Natural killer cell (primary cell): ENCODE measurements at regions of chr12 and their contacts with region 1.

Region 1: DNA sequence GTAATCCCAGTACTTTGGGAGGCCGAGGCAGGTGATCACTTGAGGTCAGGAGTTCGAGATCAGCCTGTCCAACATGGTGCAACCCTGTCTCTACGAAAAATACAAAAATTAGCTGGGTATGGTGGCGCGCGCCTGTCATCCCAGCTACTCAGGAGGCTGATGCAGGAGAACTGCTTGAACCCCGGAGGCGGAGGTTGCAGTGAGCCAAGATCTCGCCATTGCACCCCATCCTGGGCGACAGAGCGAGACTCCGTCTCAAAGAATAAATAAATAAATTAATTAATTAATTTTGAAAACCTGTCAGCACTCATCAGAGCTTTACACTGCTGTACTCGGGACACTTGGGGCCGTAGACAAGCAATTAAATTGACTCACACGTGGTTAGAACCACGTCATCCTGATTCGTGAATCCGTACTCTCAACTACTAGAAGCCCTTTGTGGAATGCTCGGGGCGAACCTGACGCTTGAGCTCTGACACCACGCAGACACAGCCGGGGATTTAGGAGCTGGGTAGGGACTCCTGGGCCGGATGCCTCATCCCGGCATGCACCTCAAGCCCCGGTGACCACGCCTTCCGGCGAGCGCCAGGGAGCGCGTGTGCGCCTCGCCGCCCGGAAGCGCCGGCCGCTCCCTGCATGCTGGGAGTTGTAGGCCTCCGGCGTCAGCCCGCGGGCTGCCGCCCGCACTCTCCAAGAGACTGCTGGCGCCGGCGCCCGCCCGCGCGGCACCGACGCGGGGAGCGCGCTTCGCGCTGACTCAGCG is at the start of gene XPOT:
- DNase-seq: peak; percentile 87 to 98
- ATAC-seq: peak; percentile 90 to 98 (median 93)
- H3K4me3 ChIP-seq: peak within 1 kb of the TSS; percentile 100
- H3K4me3 Mint-ChIP-seq: peak within 1 kb of the TSS; percentile 99
- H3K27ac ChIP-seq: peak within 1 kb of the TSS; percentile 96
- H3K27ac Mint-ChIP-seq: peak within 1 kb of the TSS; percentile 88 to 98
- H3K4me1 ChIP-seq: peaks cover 18% of the 10 kb centered on the region
- H3K4me1 Mint-ChIP-seq: peaks cover 8 to 15% of the 10 kb centered on the region in 2 donors
- H3K27me3 ChIP-seq: no peaks in the 10 kb centered on the region
- H3K27me3 Mint-ChIP-seq: peaks cover 8 to 10% of the 10 kb centered on the region in 2 donors
- CTCF ChIP-seq: no peak
- total RNA-seq, gene XPOT: 39.8 to 51.5 (median 45.0) TPM

Region 2: DNA sequence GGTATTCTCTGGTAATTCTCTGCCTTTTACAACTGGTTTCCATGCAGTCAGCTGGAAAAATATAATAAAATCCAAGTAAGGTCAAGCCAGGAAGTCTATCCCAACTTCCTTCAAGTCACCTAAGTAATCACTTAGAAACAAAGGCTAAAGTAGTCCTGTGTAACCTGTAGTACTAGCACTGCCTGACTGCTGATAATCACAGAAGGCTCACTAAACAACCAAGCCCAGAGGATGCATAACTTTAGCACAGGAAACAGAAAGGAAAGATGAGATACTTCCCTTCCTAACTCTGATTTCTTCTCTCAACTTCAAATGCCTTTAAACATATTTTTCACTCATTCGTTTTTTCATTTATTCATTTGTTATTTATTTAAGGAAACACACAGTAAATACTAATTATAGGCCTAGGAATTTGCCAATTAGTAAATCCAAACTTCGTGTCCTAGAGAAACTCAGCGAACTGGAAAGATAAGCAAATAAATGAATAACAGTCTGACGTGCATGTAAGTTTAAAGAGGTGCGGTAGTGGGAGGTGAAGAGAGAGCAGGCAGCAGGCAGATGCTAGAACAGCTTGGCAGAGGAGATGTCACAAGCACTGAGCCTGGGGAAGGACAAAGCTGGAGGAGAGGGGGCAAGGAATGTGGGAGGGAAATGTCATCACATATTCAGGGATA is 964.0 kb before region 1 on chr12:
- intact Hi-C with region 1: no loop called
- DNase-seq: no peak
- ATAC-seq: no peak
- H3K4me3 ChIP-seq: no peak overlapping the region
- H3K4me3 Mint-ChIP-seq: no peak overlapping the region
- H3K27ac ChIP-seq: no peak overlapping the region
- H3K27ac Mint-ChIP-seq: no peak overlapping the region
- H3K4me1 ChIP-seq: no peaks in the 10 kb centered on the region
- H3K4me1 Mint-ChIP-seq: no peaks in the 10 kb centered on the region
- H3K27me3 ChIP-seq: no peaks in the 10 kb centered on the region
- H3K27me3 Mint-ChIP-seq: peaks cover 0 to 2% of the 10 kb centered on the region in 2 donors
- CTCF ChIP-seq: no peak

Region 3: GRCh38 chr12:64222009-64222765 is 181.7 kb before region 1 on chr12 and contains the start of gene KICS2:
- intact Hi-C with region 1: loop called (anchors 1 kb)
- DNase-seq: peak; percentile 92 to 97
- ATAC-seq: peak; percentile 89 to 97 (median 92)
- H3K4me3 ChIP-seq: peak within 1 kb of the TSS; percentile 94
- H3K4me3 Mint-ChIP-seq: peak within 1 kb of the TSS; percentile 98
- H3K27ac ChIP-seq: peak within 1 kb of the TSS; percentile 94
- H3K27ac Mint-ChIP-seq: peak within 1 kb of the TSS; percentile 96 to 97
- H3K4me1 ChIP-seq: peaks cover 12% of the 10 kb centered on the region
- H3K4me1 Mint-ChIP-seq: peaks cover 26 to 37% of the 10 kb centered on the region in 2 donors
- H3K27me3 ChIP-seq: no peaks in the 10 kb centered on the region
- H3K27me3 Mint-ChIP-seq: peaks cover 15 to 21% of the 10 kb centered on the region in 2 donors
- CTCF ChIP-seq: no peak
- total RNA-seq, gene KICS2: 14.7 to 19.5 (median 15.6) TPM

Region 4: GRCh38 chr12:64451687-64452558 is 48.0 kb after region 1 on chr12 and contains the start of gene TBK1:
- intact Hi-C with region 1: loop called (anchors 2 kb)
- DNase-seq: peak; percentile 72 to 77
- ATAC-seq: peak; percentile 71 to 84 (median 80)
- H3K4me3 ChIP-seq: peak within 1 kb of the TSS; percentile 98
- H3K4me3 Mint-ChIP-seq: peak within 1 kb of the TSS; percentile 96
- H3K27ac ChIP-seq: peak within 1 kb of the TSS; percentile 89
- H3K27ac Mint-ChIP-seq: peak within 1 kb of the TSS; percentile 94 to 97
- H3K4me1 ChIP-seq: peaks cover 11% of the 10 kb centered on the region
- H3K4me1 Mint-ChIP-seq: peaks cover 40 to 46% of the 10 kb centered on the region in 2 donors
- H3K27me3 ChIP-seq: no peaks in the 10 kb centered on the region
- H3K27me3 Mint-ChIP-seq: no peaks in the 10 kb centered on the region
- CTCF ChIP-seq: no peak
- total RNA-seq, gene TBK1: 48.4 to 57.1 (median 48.8) TPM

Region 5: GRCh38 chr12:65169320-65170208 is 765.7 kb after region 1 on chr12 and contains the start of gene LEMD3:
- intact Hi-C with region 1: loop called (anchors 10 kb)
- DNase-seq: peak; percentile 88 to 98
- ATAC-seq: peak; percentile 81 to 93 (median 88)
- H3K4me3 ChIP-seq: peak within 1 kb of the TSS; percentile 97
- H3K4me3 Mint-ChIP-seq: peak within 1 kb of the TSS; percentile 99
- H3K27ac ChIP-seq: peak within 1 kb of the TSS; percentile 97
- H3K27ac Mint-ChIP-seq: peak within 1 kb of the TSS; percentile 99 to 100
- H3K4me1 ChIP-seq: peaks cover 11% of the 10 kb centered on the region
- H3K4me1 Mint-ChIP-seq: peaks cover 30 to 38% of the 10 kb centered on the region in 2 donors
- H3K27me3 ChIP-seq: no peaks in the 10 kb centered on the region
- H3K27me3 Mint-ChIP-seq: no peaks in the 10 kb centered on the region
- CTCF ChIP-seq: no peak
- total RNA-seq, gene LEMD3: 67.3 to 76.2 (median 71.1) TPM